Dendritic cell treated with granulocyte-macrophage colony-stimulating factor and Interleukin-4, amounts not matched to agents 40 ng/mL and 50 ng/mL, for 4 days (primary cell): ENCODE measurements at regions of chr2 and their contacts with region 1.

Region 1: GRCh38 chr2:42770288-42771131 is 6.6 kb upstream of the OXER1 start:
- H3K4me3 Mint-ChIP-seq: no peak overlapping the region
- H3K27ac Mint-ChIP-seq: no peak overlapping the region
- H3K4me1 Mint-ChIP-seq: peaks cover 24% of the 10 kb centered on the region
- H3K27me3 Mint-ChIP-seq: peaks cover 7% of the 10 kb centered on the region

Region 2: DNA sequence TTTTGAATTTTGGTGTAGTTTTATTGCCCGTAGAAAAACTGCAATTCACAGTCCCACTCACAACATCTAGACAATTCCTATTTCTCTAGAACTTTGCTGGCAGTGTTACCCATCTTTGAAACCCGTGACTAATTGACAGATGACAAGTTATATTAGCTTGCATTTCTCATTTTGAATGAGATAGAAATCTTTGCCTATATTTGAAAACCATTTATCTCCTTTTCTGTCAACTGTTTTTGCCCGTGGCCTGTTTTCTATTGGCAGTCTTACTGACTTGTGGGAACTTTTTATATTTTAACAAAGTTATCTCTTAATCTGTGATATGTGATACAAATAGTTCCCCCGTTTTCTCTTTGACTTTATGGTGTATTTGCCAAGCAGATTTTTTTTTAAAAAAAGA is 56.5 kb before region 1 on chr2:
- intact Hi-C with region 1: loop called (anchors 10 kb)
- H3K4me3 Mint-ChIP-seq: no peak overlapping the region
- H3K27ac Mint-ChIP-seq: no peak overlapping the region
- H3K4me1 Mint-ChIP-seq: no peaks in the 10 kb centered on the region
- H3K27me3 Mint-ChIP-seq: no peaks in the 10 kb centered on the region

Region 3: DNA sequence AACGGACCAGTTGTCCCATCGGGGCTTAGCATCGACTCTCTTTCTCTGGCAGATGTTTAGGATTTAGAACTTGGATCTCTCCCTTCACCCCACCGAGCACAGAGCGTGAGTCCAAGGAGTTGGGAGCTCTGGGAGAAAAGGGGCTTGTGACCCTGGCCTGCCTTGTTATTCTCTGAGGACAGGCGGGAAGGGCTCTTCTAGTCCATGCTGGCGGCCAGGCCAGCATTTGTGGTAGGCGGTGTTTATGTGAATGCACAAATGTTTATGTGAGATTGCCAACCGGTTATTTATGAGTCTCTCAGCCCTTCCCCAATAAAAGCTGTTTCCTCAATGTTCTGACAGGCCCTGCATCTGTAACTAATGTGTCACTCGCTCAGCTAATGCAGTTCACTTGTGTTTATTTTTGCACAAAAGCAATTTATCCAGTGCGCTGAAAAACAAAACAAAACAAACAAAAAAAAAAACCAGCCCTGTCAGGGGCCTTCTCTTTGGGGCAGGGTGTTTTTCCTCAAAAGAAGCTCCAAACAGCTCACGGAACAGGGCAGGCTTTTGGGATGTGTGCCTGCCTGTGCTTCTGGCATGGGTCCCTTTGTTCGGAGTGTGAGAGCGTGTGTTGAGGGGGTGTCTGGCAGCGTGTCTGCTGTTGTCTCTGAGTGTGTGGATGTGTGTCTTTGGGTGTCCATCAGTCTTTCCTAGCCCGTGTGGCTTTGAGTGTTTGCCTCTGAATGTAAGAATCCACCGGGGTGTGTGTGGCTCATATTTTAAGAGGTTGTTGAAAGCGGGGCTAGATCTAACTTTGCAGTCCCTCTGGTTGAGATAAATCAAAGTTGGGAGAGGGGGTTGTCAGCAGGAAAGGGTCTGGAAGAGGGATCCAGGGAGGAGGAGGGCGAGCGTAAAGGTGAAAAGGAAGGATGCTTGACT is 74.7 kb after region 1 on chr2:
- intact Hi-C with region 1: no loop called
- H3K4me3 Mint-ChIP-seq: no peak overlapping the region
- H3K27ac Mint-ChIP-seq: no peak overlapping the region
- H3K4me1 Mint-ChIP-seq: peaks cover 23% of the 10 kb centered on the region
- H3K27me3 Mint-ChIP-seq: peaks cover 10% of the 10 kb centered on the region